ENCODE measurements at regions of chr19 and their contacts with region 1.

Region 1: GRCh38 chr19:39412100-39412866 is at the start of gene PLEKHG2:
- DNase-seq: peak; percentile 92 to 99 (median 94)
- ATAC-seq: peak; percentile 83
- H3K4me3 ChIP-seq: peak within 1 kb of the TSS; percentile 71
- H3K27ac ChIP-seq: peak within 1 kb of the TSS; percentile 98
- H3K4me1 ChIP-seq: peaks cover 39 to 77% of the 10 kb centered on the region in 2 experiments
- H3K27me3 ChIP-seq: no peaks in the 10 kb centered on the region
- CTCF ChIP-seq: peak in 2 of 3 experiments; percentile 77 to 87; a peak in 5 of 6 replicates
- EP300 ChIP-seq: peak; percentile 51
- POLR2A ChIP-seq: peak; percentile 81
- RAD21 ChIP-seq: peak; percentile 45 to 59
- polyA plus RNA-seq, gene PLEKHG2: 0.98 to 3.0 TPM

Region 2: DNA sequence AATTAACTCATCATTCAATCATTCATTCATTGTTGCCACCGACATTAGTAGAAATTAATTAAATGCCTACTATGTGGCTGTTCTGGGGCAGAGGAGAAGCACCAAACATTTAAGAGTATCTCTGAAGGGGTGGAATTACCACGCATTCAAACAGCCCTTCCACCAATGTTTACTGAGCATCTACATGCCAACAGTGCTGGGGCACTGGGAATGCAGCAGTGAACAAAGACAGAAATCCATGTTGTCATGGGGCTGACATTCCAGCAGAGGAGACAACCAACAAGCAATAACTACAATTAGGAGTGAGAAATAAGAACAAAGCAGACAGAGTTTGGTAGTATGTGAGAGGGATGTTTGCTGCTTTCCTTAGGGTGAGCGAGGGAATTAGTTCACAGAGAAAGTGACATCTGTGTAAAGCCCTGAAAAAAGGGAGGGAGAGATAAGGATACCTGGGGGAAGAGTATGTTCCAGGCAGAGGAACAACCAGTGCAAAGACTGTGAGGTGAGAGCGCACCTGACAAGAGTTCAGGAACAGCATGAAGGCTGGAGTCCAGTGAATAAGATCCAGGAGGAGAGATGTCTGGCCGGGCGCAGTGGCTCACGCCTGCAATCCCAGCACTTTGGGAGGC is 288.0 kb before region 1 on chr19:
- CTCF ChIA-PET with region 1: interaction called, 3 read pairs
- POLR2A ChIA-PET with region 1: interaction called, 5 read pairs
- in situ Hi-C with region 1: no loop called
- intact Hi-C with region 1: loop called (anchors 5 kb)
- DNase-seq: no peak
- ATAC-seq: no peak
- H3K4me3 ChIP-seq: no peak overlapping the region
- H3K27ac ChIP-seq: no peak overlapping the region
- H3K4me1 ChIP-seq: peaks cover 3 to 24% of the 10 kb centered on the region in 2 experiments; a peak in 3 of 5 replicates
- H3K27me3 ChIP-seq: no peaks in the 10 kb centered on the region; a peak in 1 of 5 replicates
- CTCF ChIP-seq: no peak
- EP300 ChIP-seq: no peak
- POLR2A ChIP-seq: no peak
- RAD21 ChIP-seq: no peak

Region 3: GRCh38 chr19:39212375-39212742 is 199.9 kb before region 1 on chr19:
- CTCF ChIA-PET with region 1: interaction called, 12 read pairs
- POLR2A ChIA-PET with region 1: no interaction called
- in situ Hi-C with region 1: no loop called
- intact Hi-C with region 1: loop called (anchors 2 kb)
- DNase-seq: peak; percentile 48 to 75 (median 60)
- ATAC-seq: peak; percentile 96
- H3K4me3 ChIP-seq: no peak overlapping the region
- H3K27ac ChIP-seq: no peak overlapping the region
- H3K4me1 ChIP-seq: no peaks in the 10 kb centered on the region
- H3K27me3 ChIP-seq: peaks cover 0 to 5% of the 10 kb centered on the region in 2 experiments; a peak in 1 of 5 replicates
- CTCF ChIP-seq: peak; percentile 84 to 90 (median 89)
- EP300 ChIP-seq: no peak
- POLR2A ChIP-seq: no peak
- RAD21 ChIP-seq: peak; percentile 78 to 97

Region 4: DNA sequence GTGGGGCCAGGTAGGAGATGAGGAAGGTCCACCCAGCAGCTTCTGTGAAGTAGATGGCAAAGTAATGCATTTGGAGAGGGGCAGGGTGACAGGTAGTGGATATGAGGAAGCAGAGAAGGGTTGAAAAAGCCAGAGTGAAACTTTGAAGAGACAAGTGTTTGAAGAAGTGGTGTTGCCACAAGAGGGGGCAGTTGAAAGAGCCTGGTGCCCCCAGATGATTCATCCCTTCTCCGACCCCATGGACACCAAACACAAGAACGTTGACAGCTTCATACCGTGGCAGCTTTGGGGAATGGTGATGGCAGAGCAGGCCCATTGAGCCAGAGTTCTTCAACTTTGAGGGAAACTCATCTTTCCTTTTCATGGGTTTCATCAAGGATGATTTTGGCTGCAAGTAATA is 187.4 kb before region 1 on chr19:
- CTCF ChIA-PET with region 1: no interaction called
- POLR2A ChIA-PET with region 1: no interaction called
- in situ Hi-C with region 1: no loop called
- intact Hi-C with region 1: loop called (anchors 5 kb)
- DNase-seq: peak in 1 of 4 experiments; percentile 33
- ATAC-seq: peak; percentile 33; the same call in 2 of the 3 replicates
- H3K4me3 ChIP-seq: no peak overlapping the region
- H3K27ac ChIP-seq: no peak overlapping the region
- H3K4me1 ChIP-seq: no peaks in the 10 kb centered on the region; a peak in 1 of 5 replicates
- H3K27me3 ChIP-seq: peaks cover 2 to 23% of the 10 kb centered on the region in 2 experiments; a peak in 4 of 5 replicates
- CTCF ChIP-seq: peak; percentile 20 to 43 (median 39); a peak in 3 of 6 replicates
- EP300 ChIP-seq: no peak
- POLR2A ChIP-seq: no peak
- RAD21 ChIP-seq: peak in 1 of 2 experiments; percentile 31; a peak in 2 of 4 replicates

Region 5: GRCh38 chr19:39341719-39342604 is 70.3 kb before region 1 on chr19 and contains the start of gene SAMD4B:
- CTCF ChIA-PET with region 1: interaction called, 4 read pairs
- POLR2A ChIA-PET with region 1: interaction called, 4 read pairs
- in situ Hi-C with region 1: no loop called
- intact Hi-C with region 1: loop called (anchors 2 kb)
- DNase-seq: peak; percentile 95 to 99 (median 97)
- ATAC-seq: peak; percentile 95
- H3K4me3 ChIP-seq: peak within 1 kb of the TSS; percentile 88
- H3K27ac ChIP-seq: peak within 1 kb of the TSS; percentile 93
- H3K4me1 ChIP-seq: peaks cover 20% of the 10 kb centered on the region in 2 experiments
- H3K27me3 ChIP-seq: no peaks in the 10 kb centered on the region
- CTCF ChIP-seq: peak; percentile 47 to 79 (median 78); a peak in 5 of 6 replicates
- EP300 ChIP-seq: peak; percentile 53; the same call in 1 of the 2 replicates
- POLR2A ChIP-seq: peak; percentile 94
- RAD21 ChIP-seq: peak in 1 of 2 experiments; percentile 26; a peak in 1 of 4 replicates
- polyA plus RNA-seq, gene SAMD4B: 3.4 to 5.9 TPM

Region 6: DNA sequence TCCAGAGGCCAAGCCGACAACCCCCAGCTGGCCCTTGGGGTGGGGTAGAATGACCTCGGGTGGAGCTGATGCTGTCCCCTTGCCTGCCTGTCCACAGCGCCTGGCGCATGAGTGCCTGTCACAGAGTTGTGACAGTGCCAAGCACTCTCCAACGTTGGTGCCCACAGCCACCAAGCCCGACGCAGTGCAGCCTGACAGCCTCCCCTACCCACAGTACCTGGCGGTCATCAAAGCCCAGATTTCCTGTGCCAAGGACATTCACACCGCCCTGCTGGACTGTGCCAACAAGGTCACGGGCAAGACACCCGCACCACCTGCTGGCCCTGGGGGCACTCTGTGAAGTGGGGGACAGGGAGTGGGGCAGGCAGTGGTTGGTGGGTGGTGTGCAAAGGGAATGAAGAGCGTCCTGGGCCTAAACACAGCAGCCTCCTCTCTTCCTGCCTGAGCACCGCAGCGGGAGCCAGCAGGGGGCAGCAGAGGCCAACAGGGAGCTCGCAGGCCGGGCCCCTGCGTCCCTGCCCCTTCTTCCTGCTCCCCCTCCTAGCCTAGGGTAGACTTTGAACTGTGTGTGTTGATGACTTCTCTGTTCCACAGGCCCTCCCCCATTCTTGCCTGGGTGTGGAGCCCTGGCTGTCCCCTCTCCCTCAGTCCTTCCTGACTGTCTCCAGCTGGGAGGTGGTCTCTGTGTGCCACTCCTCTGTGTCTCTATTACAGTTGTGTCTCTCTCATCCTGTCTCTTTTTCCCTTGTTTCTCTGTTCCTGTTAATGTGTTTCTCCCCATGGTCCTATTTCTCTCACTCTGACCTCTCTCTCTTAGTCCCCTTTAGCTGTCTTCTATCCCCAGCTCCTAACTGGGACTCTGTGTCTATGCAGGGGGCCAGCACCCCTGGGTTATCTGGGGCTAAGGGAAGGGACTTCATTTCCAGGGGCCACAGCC is 14.7 kb before region 1 on chr19:
- CTCF ChIA-PET with region 1: interaction called, 74 read pairs
- POLR2A ChIA-PET with region 1: interaction called, 12 read pairs
- in situ Hi-C with region 1: no loop called
- intact Hi-C with region 1: loop called (anchors 1 kb)
- DNase-seq: peak; percentile 79 to 92 (median 86)
- ATAC-seq: peak; percentile 92
- H3K4me3 ChIP-seq: no peak overlapping the region
- H3K27ac ChIP-seq: peak overlapping the region; percentile 68
- H3K4me1 ChIP-seq: peaks cover 33 to 42% of the 10 kb centered on the region in 2 experiments
- H3K27me3 ChIP-seq: no peaks in the 10 kb centered on the region
- CTCF ChIP-seq: peak; percentile 96
- EP300 ChIP-seq: no peak; the same call in 1 of the 2 replicates
- POLR2A ChIP-seq: 0 out of 2 replicates have a peak, but pooled peaks have one; percentile 26
- RAD21 ChIP-seq: peak; percentile 97 to 99

Region 7: DNA sequence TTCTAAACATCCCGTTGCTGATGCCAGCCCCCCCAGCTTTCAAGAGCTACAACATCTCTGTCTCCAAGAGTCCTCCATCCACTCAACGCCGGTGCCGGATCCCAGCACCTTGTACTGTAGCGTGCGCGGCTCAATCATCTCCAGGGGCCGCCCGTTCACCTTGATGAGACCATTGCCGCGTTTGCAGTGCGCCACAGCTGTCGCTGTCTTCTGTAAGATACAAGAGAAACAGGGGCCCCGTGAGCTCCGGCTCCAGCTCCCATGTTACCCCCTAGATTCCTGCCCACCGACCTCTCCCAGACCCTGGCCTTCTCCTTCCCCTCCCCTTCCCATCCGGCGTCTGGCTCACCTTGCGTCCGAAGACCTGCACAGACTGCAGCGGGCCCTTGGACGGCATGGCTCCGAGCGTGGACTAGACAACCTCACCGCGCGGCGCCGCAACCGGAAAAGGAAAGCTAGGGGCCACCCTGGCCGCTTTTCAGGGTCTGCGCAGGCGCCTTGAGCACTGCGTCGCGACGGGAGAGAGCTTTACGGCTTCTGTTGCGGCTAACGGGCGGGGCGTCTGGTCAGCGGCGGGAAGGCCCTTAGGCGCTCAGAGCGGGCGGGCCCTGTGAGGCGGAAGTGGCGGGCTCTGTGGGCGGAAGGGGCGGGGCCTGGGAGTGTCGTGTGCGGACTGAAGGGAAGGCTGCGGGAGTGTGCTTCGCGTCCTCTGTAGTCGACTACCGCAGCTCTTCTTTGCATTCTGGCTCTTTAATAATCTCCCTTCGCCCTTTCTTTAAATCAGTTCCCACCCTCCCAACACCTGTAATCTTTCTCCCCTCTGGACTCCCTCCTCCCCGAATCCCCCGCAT is 23.4 kb after region 1 on chr19 and contains the start of gene RPS16:
- CTCF ChIA-PET with region 1: no interaction called
- POLR2A ChIA-PET with region 1: interaction called, 18 read pairs
- in situ Hi-C with region 1: no loop called
- intact Hi-C with region 1: no loop called
- DNase-seq: peak; percentile 95 to 99 (median 95)
- ATAC-seq: peak; percentile 88
- H3K4me3 ChIP-seq: peak within 1 kb of the TSS; percentile 100
- H3K27ac ChIP-seq: peak within 1 kb of the TSS; percentile 95
- H3K4me1 ChIP-seq: peaks cover 25 to 29% of the 10 kb centered on the region in 2 experiments
- H3K27me3 ChIP-seq: no peaks in the 10 kb centered on the region
- CTCF ChIP-seq: no peak
- EP300 ChIP-seq: no peak
- POLR2A ChIP-seq: peak; percentile 99
- RAD21 ChIP-seq: no peak
- polyA plus RNA-seq, gene RPS16: 2,545 to 3,175 TPM

Region 8: GRCh38 chr19:39469036-39469435 is 56.8 kb after region 1 on chr19:
- CTCF ChIA-PET with region 1: no interaction called
- POLR2A ChIA-PET with region 1: no interaction called
- in situ Hi-C with region 1: no loop called
- intact Hi-C with region 1: no loop called
- DNase-seq: no peak
- ATAC-seq: no peak
- H3K4me3 ChIP-seq: no peak overlapping the region
- H3K27ac ChIP-seq: no peak overlapping the region
- H3K4me1 ChIP-seq: peaks cover 0 to 11% of the 10 kb centered on the region in 2 experiments; a peak in 1 of 5 replicates
- H3K27me3 ChIP-seq: no peaks in the 10 kb centered on the region
- CTCF ChIP-seq: no peak
- EP300 ChIP-seq: no peak
- POLR2A ChIP-seq: no peak
- RAD21 ChIP-seq: no peak

Region 9: GRCh38 chr19:39951686-39952085 is 539.4 kb after region 1 on chr19:
- CTCF ChIA-PET with region 1: no interaction called
- POLR2A ChIA-PET with region 1: no interaction called
- in situ Hi-C with region 1: no loop called
- intact Hi-C with region 1: no loop called
- DNase-seq: no peak
- ATAC-seq: no peak
- H3K4me3 ChIP-seq: no peak overlapping the region
- H3K27ac ChIP-seq: no peak overlapping the region
- H3K4me1 ChIP-seq: no peaks in the 10 kb centered on the region
- H3K27me3 ChIP-seq: peaks cover 3% of the 10 kb centered on the region in 2 experiments; a peak in 2 of 5 replicates
- CTCF ChIP-seq: no peak
- EP300 ChIP-seq: no peak
- POLR2A ChIP-seq: no peak
- RAD21 ChIP-seq: no peak